Activated CD4-positive, alpha-beta memory T cell treated with anti-CD3 and anti-CD28 coated beads, Interleukin-2, amount 10 ng/mL, durations not matched to agents 7 days and 5 days (primary cell): ENCODE measurements at regions of chr16 and their contacts with region 1.

Region 1: GRCh38 chr16:58336332-58337089 is 41.7 kb upstream of the PRSS54 start:
- DNase-seq: peak; percentile 87
- H3K4me3 Mint-ChIP-seq: no peak overlapping the region
- H3K27ac Mint-ChIP-seq: no peak overlapping the region
- H3K4me1 Mint-ChIP-seq: peaks cover 7% of the 10 kb centered on the region
- H3K27me3 Mint-ChIP-seq: peaks cover 8% of the 10 kb centered on the region

Region 2: DNA sequence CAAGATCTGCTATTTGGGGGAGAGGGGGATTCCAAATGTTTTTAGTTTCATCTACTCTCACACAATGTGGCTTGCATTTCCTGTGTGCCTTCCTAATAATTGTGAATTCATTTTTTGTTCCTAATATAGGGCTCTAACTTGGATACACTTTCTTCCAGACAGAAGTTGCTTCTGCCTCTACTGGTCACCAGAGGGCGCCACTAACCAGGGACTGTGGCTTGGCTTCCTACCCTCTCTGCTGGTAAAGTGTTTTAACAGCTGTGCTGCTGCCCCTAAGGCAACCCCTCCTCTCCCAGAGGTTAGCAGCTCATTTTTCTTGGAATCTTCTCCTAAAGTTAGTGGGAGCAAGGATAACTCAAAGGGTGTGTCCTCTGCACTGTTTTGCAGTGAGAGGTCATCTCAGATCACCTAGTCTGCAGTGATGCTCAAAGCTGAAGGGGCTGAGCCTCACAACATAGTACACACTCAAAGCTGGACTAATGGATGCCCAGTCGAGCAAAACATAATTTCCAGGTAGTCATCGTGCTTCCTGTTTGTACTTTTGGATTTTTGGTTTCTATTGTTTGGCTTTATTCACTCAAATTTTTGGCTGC is 36.7 kb before region 1 on chr16:
- CTCF ChIA-PET with region 1: interaction called, 14 read pairs
- POLR2A ChIA-PET with region 1: no interaction called
- DNase-seq: peak; percentile 42
- H3K4me3 Mint-ChIP-seq: no peak overlapping the region
- H3K27ac Mint-ChIP-seq: no peak overlapping the region
- H3K4me1 Mint-ChIP-seq: no peaks in the 10 kb centered on the region
- H3K27me3 Mint-ChIP-seq: peaks cover 21% of the 10 kb centered on the region

Region 3: DNA sequence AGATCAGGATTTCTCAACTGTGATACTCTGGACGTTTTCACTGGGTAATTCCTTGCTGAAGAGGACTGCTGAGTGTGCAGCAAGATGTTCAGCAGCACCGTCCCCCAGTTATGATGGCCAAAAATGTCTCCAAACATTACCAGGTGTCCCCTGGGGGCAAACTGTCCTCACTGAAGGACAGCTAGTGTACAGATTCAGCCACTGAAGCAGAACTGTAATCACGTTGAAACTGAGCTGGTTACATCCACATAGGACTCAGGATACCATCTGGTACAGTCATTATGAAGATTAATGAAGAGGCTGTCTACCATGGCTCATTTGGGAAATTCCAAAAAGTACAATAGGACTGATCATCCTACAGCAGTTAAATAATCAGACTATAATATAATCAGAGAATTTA is 12.5 kb after region 1 on chr16:
- CTCF ChIA-PET with region 1: interaction called, 10 read pairs
- POLR2A ChIA-PET with region 1: no interaction called
- DNase-seq: no peak
- H3K4me3 Mint-ChIP-seq: no peak overlapping the region
- H3K27ac Mint-ChIP-seq: no peak overlapping the region
- H3K4me1 Mint-ChIP-seq: peaks cover 4% of the 10 kb centered on the region
- H3K27me3 Mint-ChIP-seq: peaks cover 35% of the 10 kb centered on the region

Region 4: GRCh38 chr16:58487566-58488351 is 151.2 kb after region 1 on chr16:
- CTCF ChIA-PET with region 1: interaction called, 213 read pairs
- POLR2A ChIA-PET with region 1: interaction called, 9 read pairs
- DNase-seq: peak; percentile 74
- H3K4me3 Mint-ChIP-seq: no peak overlapping the region
- H3K27ac Mint-ChIP-seq: no peak overlapping the region
- H3K4me1 Mint-ChIP-seq: no peaks in the 10 kb centered on the region
- H3K27me3 Mint-ChIP-seq: peaks cover 3% of the 10 kb centered on the region

Region 5: GRCh38 chr16:58494981-58495520 is 158.5 kb after region 1 on chr16:
- CTCF ChIA-PET with region 1: interaction called, 29 read pairs
- POLR2A ChIA-PET with region 1: no interaction called
- DNase-seq: peak; percentile 72
- H3K4me3 Mint-ChIP-seq: no peak overlapping the region
- H3K27ac Mint-ChIP-seq: no peak overlapping the region
- H3K4me1 Mint-ChIP-seq: peaks cover 16% of the 10 kb centered on the region
- H3K27me3 Mint-ChIP-seq: peaks cover 3% of the 10 kb centered on the region

Region 6: GRCh38 chr16:58755989-58756649 is 419.6 kb after region 1 on chr16:
- CTCF ChIA-PET with region 1: interaction called, 26 read pairs
- POLR2A ChIA-PET with region 1: no interaction called
- DNase-seq: peak; percentile 83
- H3K4me3 Mint-ChIP-seq: peak overlapping the region; percentile 43
- H3K27ac Mint-ChIP-seq: peak overlapping the region; percentile 16
- H3K4me1 Mint-ChIP-seq: peaks cover 10% of the 10 kb centered on the region
- H3K27me3 Mint-ChIP-seq: no peaks in the 10 kb centered on the region